PC-9 (cell line): ENCODE measurements at regions of chr12 and their contacts with region 1.

Region 1: DNA sequence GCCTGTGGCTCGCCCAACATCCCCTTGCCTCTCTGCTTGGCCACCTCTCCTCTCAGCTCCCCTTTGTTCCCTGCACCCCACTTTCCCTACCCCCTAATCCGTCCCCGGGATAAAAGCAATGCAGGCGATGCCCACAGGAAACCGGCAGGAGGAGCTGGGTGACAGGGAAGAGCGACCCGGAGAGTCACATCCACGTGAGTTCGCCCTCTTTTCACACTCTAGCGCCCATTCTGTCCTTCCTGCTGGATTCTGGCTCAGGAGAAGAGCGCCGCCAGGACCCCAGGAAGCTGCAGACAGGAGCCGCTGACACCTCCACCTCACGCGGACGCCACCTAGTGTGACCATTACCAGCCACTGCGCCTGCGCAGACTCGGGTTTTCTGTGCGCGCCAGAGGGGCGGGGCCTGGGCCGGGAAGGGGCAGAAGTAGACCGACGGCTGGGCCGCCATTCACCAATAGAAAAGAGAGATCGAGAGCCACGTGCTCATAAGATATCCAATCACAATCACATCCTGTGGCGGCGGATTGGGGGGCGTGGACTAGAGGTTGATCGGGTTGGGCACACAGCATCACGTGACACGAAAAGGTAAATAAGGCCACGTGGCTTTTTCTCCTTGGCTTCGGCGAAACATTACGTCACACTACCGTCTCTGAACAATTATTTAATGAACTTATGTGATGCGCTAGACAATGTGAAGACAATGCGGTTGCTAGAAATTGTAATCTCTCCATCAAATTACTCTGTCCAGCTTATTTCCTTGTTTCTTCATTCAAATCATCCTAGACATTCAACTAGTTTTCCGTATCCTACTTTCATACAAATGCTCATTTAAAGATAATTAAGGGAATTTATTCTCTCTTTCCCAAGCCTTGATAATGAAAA is 10.1 kb downstream of the PLA2G1B start:
- DNase-seq: peak; percentile 99
- H3K4me3 ChIP-seq: peak overlapping the region; percentile 82
- H3K27ac ChIP-seq: peak overlapping the region; percentile 73
- H3K4me1 ChIP-seq: no peaks in the 10 kb centered on the region
- H3K27me3 ChIP-seq: no peaks in the 10 kb centered on the region
- CTCF ChIP-seq: no peak; the same call in 1 of the 2 replicates

Region 2: DNA sequence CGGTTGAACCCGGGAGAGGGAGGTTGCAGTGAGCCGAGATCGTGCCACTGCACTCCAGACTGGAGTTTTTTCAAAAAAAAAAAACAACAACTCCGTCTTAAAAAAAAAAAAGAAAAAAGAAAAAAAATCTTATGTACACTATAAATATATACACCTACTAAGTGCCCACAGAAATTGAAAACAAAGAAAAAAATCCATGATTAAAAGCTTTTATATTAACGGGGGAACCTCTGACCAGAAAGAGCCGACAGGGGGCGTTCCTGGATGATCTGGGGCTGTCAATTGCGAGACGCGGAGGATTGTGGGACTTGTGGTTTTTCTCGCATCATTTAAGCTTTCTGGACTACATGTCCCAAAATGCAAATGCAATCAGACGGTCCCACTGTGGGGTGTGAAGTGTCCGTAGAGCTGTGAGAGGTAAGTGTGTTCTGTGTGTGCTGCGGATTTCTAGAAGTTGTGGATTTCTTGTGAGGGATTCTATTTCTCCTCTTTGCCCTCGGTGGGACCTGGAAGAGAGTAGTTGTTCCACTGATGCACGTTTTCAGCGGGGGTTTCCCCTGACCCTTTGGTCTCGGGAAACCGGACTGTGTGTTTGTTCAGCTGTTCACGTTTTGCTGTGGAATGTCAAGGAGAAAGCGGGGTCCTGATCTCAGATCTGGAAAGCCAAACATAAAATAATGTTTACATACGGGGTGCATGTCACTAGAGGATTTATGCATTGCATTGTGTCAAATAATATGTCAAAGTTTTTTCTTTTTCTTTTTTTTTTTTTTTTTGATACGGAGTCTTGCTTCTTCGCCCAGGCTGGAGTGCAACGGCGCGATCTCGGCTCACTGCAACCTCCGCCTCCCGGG is 15.3 kb before region 1 on chr12 and contains the start of gene SIRT4:
- CTCF ChIA-PET with region 1: interaction called, 7 read pairs
- POLR2A ChIA-PET with region 1: interaction called, 11 read pairs
- intact Hi-C with region 1: loop called (anchors 1 kb)
- DNase-seq: peak; percentile 78 to 82
- H3K4me3 ChIP-seq: peak within 1 kb of the TSS; percentile 74
- H3K27ac ChIP-seq: no peak within 1 kb of the TSS
- H3K4me1 ChIP-seq: no peaks in the 10 kb centered on the region
- H3K27me3 ChIP-seq: no peaks in the 10 kb centered on the region
- CTCF ChIP-seq: peak; percentile 85
- total RNA-seq, gene SIRT4: 3.2 and 3.6 TPM in 2 replicates